K562 (cell line): ENCODE measurements at regions of chr11 and their contacts with region 1.

Region 1: DNA sequence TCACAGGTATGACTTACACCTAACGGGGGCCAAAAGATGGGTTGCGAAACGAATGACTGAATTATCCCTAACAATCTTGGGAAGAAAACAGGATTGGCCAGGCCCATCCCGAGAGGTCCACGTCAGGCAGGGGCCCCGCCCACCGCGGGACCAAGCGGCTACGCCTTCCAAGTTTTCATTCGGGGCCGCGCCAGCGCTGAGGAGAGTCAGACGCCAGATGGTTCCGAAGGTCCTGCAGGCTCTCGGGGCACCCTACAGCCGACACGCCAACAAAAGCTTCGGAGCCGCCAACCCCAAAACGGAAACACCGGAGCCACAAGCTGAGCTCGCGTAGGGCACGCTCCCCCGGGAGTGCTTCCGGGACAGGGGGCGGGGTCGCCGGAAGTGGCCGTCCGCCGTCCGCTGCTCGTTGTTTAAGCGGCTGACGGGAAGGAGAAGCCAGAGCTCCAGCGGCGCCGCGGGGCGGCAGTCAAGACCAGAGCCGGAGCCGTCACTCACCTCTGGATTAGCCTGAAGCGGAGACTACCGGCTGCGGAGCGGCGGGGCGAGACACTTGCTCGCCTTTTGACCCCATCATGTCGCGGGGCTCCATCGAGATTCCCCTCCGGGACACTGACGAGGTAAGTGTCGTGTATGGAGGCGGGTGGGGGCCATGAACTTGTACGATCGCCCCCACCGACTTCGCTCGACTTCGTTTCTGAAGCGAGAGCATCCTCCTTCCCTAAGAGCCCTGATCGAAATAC is at the start of gene CTR9:
- DNase-seq: peak; percentile 78 to 96 (median 84)
- ATAC-seq: peak; percentile 95
- H3K4me3 ChIP-seq: peak within 1 kb of the TSS; percentile 63
- H3K27ac ChIP-seq: peak within 1 kb of the TSS; percentile 89
- H3K4me1 ChIP-seq: peaks cover 13 to 19% of the 10 kb centered on the region in 2 experiments
- H3K27me3 ChIP-seq: no peaks in the 10 kb centered on the region
- CTCF ChIP-seq: peak; percentile 37 to 66 (median 60); a peak in 5 of 6 replicates
- EP300 ChIP-seq: peak; percentile 26; the same call in 1 of the 2 replicates
- POLR2A ChIP-seq: peak; percentile 93
- RAD21 ChIP-seq: peak; percentile 14 to 53
- polyA plus RNA-seq, gene CTR9: 25.4 to 38.3 TPM

Region 2: GRCh38 chr11:10762185-10762584 is 11.2 kb after region 1 on chr11:
- CTCF ChIA-PET with region 1: no interaction called
- POLR2A ChIA-PET with region 1: interaction called, 15 read pairs
- in situ Hi-C with region 1: no loop called
- intact Hi-C with region 1: no loop called
- DNase-seq: no peak
- ATAC-seq: no peak
- H3K4me3 ChIP-seq: no peak overlapping the region
- H3K27ac ChIP-seq: no peak overlapping the region
- H3K4me1 ChIP-seq: peaks cover 0 to 2% of the 10 kb centered on the region in 2 experiments; a peak in 2 of 5 replicates
- H3K27me3 ChIP-seq: no peaks in the 10 kb centered on the region
- CTCF ChIP-seq: no peak
- EP300 ChIP-seq: no peak
- POLR2A ChIP-seq: no peak
- RAD21 ChIP-seq: no peak